Left colon (tissue), 2 donors: ENCODE measurements at regions of chr20 and their contacts with region 1.

Region 1: DNA sequence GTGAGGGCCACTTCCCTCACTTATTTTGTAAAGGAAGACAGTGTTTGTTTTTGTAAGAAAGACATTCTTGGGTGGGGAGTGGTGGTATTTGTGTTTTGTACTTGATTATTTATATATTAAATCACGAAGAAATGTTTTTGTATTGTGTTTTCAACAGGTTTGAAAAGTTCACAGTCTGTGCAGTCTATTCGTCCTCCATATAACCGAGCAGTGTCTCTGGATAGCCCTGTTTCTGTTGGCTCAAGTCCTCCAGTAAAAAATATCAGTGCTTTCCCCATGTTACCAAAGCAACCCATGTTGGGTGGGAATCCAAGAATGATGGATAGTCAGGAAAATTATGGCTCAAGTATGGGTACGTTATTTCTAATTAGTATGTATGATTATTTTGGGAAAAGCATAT is 137.2 kb downstream of the NCOA3 start:
- DNase-seq: no peak
- ATAC-seq: no peak

Region 2: GRCh38 chr20:47400685-47401084 is 238.2 kb before region 1 on chr20:
- intact Hi-C with region 1: loop called in 1 of 2 experiments (anchors 10 kb)
- DNase-seq: no peak
- ATAC-seq: no peak

Region 3: GRCh38 chr20:47501483-47502270 is 137.2 kb before region 1 on chr20 and contains the start of gene NCOA3:
- intact Hi-C with region 1: no loop called
- DNase-seq: peak; percentile 96 to 99
- ATAC-seq: peak; percentile 91
- total RNA-seq, gene NCOA3: 22.9 to 23.6 TPM

Region 4: DNA sequence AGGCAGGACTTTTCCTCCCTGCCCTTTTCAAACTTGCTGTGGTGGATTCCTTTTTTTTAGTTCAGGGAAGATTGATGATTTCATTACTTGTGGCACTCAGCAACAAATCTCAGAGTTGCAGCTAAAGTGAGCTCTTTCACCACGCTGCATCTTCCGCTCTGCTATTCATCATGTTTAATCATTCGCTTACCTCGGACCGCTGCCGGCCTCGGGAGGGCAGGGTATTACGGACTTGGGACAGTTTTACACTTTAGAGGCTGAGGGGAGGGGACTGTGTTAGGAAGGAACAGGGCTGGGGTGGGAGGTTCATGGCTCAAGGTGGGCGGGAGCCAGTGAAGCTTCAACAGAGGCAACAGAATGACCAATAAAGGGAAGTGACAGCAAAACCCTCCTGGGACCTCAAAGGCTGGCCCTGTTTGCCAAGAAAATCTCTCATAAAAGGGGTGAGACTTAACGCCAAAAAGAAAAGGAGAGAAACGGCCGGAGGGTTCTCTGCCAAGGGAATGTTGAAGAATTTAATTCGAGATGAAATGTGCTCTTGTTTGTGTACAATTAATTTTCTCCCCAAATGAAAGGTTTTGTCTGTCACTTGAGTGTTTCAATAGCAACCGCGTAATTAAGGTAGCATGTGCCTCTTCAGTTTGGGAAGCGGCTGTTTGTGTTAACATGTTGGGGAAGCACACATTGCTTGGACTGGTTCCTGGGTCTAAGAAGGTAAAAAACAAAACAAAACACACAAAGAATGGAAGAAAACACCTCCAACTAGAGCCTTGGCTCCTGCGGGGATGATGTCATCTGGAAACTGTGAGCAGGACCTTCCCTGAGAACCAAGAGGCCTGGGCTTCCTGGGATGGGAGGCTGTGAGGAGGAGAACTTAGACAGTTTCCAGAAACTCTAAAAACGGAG is 219.0 kb after region 1 on chr20:
- intact Hi-C with region 1: no loop called
- DNase-seq: no peak
- ATAC-seq: no peak